ENCODE measurements at regions of chr11 and their contacts with region 1.

Region 1: DNA sequence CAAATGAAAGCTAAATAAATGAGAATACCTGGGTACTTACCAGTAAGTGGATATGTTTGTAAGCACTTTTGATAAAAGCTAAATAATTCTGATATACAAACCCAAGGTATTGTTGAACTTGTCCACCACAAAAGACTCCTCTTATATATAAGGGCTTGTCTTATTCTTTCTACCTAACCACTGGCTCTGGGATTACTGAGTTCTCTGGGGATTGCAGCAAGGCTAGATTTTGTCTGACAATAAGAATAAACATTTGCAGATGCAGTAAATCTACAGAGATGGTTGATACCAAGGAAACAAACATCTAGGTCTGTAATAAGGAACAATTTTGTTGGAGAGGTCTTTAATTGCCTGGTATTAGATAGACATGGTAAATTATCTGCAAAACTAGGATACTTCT is at the start of gene OR51A4:
- DNase-seq: no peak
- H3K4me3 ChIP-seq: no peak within 1 kb of the TSS
- H3K27ac ChIP-seq: no peak within 1 kb of the TSS
- H3K4me1 ChIP-seq: no peaks in the 10 kb centered on the region
- H3K27me3 ChIP-seq: no peaks in the 10 kb centered on the region
- CTCF ChIP-seq: no peak
- POLR2A ChIP-seq: no peak
- total RNA-seq, gene OR51A4: not detected

Region 2: DNA sequence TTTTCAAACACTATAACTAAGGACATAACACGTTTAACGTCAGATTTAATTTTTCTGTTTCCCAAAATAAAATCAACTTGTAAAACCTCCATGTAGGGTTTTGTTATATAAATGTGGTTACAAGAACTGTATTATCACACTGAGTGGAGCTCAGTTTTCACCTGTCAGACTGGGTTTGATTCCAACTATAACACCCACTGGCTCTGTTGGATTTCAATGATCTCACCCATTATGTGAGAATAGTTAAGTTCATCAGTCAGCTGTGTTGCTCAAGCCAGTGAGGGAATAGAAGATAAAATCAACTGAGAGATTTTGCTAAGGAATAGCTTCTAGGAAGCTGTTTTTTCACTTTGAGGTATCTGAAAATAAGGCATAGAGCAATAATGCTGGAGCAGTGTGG is 138.3 kb before region 1 on chr11:
- intact Hi-C with region 1: no loop called
- DNase-seq: no peak
- H3K4me3 ChIP-seq: no peak overlapping the region
- H3K27ac ChIP-seq: no peak overlapping the region
- H3K4me1 ChIP-seq: no peaks in the 10 kb centered on the region
- H3K27me3 ChIP-seq: no peaks in the 10 kb centered on the region
- CTCF ChIP-seq: no peak
- POLR2A ChIP-seq: no peak

Region 3: DNA sequence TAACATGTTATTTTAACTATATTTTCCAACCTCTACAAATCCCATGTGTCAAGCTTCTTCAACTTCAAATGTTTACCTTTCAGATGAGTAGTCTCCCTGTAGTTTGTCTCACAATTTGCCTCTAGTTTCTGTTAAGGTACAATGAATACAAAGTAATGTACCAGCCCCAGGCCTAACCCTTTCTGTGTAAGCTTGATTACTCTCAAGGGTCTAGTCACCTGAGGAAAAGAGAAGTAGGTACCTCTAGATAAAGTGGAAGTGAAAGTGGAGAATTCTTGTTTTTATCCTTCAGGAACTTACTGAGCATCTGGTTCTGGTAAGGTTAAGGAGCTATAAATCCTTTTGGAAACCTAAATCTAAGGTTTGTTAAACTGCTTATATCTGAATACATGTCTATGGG is 44.0 kb before region 1 on chr11 and contains the start of gene OR51A7:
- intact Hi-C with region 1: loop called (anchors 2 kb)
- DNase-seq: no peak
- H3K4me3 ChIP-seq: no peak within 1 kb of the TSS
- H3K27ac ChIP-seq: no peak within 1 kb of the TSS
- H3K4me1 ChIP-seq: no peaks in the 10 kb centered on the region
- H3K27me3 ChIP-seq: no peaks in the 10 kb centered on the region
- CTCF ChIP-seq: no peak
- POLR2A ChIP-seq: no peak
- total RNA-seq, gene OR51A7: not detected

Region 4: GRCh38 chr11:5405173-5405572 is 457.7 kb after region 1 on chr11:
- intact Hi-C with region 1: no loop called
- DNase-seq: no peak
- H3K4me3 ChIP-seq: no peak overlapping the region
- H3K27ac ChIP-seq: no peak overlapping the region
- H3K4me1 ChIP-seq: no peaks in the 10 kb centered on the region
- H3K27me3 ChIP-seq: no peaks in the 10 kb centered on the region
- CTCF ChIP-seq: no peak
- POLR2A ChIP-seq: no peak

Measured in breast epithelium (tissue), 4 donors.